A673 (cell line): ENCODE measurements at regions of chr6 and their contacts with region 1.

Region 1: GRCh38 chr6:73388800-73389512 is 5.7 kb upstream of the DDX43 start:
- DNase-seq: peak; percentile 81
- H3K4me3 ChIP-seq: peak overlapping the region; percentile 51
- H3K27ac ChIP-seq: no peak overlapping the region
- H3K4me1 ChIP-seq: no peaks in the 10 kb centered on the region
- H3K27me3 ChIP-seq: no peaks in the 10 kb centered on the region
- CTCF ChIP-seq: peak; percentile 78

Region 2: DNA sequence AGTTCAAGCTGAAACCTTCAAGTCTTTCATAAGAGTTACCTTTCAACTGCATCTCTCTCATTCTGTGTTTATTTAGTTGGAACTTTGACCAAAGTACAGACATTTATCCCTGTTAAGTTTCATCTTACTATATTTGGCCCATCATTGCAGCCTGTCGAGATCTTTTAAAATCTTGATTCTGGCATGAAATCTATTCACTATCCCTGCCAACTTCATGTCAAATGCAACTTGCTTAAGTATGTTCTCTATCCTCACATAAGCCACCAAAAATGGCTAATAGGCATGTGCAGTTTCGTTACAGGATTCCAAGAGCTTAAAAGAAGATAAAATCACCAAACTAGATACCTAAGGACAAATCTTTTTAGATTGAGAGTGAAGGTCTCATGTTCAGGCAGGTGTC is 884.5 kb before region 1 on chr6:
- CTCF ChIA-PET with region 1: no interaction called
- POLR2A ChIA-PET with region 1: interaction called, 15 read pairs
- intact Hi-C with region 1: no loop called
- DNase-seq: no peak
- H3K4me3 ChIP-seq: no peak overlapping the region
- H3K27ac ChIP-seq: no peak overlapping the region
- H3K4me1 ChIP-seq: no peaks in the 10 kb centered on the region
- H3K27me3 ChIP-seq: no peaks in the 10 kb centered on the region
- CTCF ChIP-seq: no peak

Region 3: DNA sequence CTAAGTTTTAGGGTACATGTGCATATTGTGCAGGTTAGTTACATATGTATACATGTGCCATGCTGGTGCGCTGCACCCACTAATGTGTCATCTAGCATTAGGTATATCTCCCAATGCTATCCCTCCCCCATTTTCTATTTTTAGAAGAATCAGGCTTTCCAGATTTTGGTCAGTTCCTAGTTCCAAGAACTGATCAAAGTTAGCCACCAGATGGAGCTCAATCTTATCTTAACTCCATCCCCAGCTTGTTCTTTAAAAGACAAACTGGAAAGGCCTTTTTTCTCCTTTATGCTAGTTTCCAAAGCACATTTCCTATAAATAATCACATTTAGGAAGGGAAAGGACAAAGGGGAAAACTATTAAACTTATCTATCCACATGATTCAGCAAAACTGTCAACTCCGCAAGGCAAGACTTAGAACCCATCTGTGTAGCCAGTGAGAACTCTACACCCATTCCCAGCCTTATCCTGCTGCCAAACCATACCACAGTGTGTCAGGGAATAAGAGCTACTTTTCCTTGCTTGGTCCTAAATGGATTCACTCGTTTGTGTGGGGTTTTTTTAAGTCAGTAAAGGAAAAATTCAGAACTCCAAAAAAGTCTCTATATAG is 103.2 kb before region 1 on chr6:
- CTCF ChIA-PET with region 1: interaction called, 5 read pairs
- POLR2A ChIA-PET with region 1: no interaction called
- intact Hi-C with region 1: loop called (anchors 5 kb)
- DNase-seq: peak; percentile 67
- H3K4me3 ChIP-seq: no peak overlapping the region
- H3K27ac ChIP-seq: no peak overlapping the region
- H3K4me1 ChIP-seq: no peaks in the 10 kb centered on the region
- H3K27me3 ChIP-seq: no peaks in the 10 kb centered on the region
- CTCF ChIP-seq: peak; percentile 55

Region 4: DNA sequence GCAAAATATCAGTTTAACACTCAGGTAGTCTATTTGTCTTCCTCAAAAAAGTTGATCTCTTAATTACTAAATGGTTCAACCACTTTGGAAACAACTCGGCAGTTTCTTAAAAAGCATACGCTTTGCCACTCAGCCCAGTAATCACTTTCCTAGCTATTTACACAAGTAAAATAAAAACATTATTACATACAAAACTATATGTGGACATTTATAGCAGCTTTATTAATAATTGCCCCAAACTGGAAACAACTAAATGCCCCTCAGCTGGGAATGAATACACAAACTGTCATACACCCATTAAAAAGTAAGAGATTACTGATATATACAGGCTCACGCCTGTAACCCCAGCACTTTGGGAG is 124.5 kb after region 1 on chr6:
- CTCF ChIA-PET with region 1: no interaction called
- POLR2A ChIA-PET with region 1: no interaction called
- intact Hi-C with region 1: no loop called
- DNase-seq: no peak
- H3K4me3 ChIP-seq: no peak overlapping the region
- H3K27ac ChIP-seq: no peak overlapping the region
- H3K4me1 ChIP-seq: peaks cover 21% of the 10 kb centered on the region
- H3K27me3 ChIP-seq: no peaks in the 10 kb centered on the region
- CTCF ChIP-seq: no peak